ENCODE measurements at regions of chr4 and their contacts with region 1.

Region 1: DNA sequence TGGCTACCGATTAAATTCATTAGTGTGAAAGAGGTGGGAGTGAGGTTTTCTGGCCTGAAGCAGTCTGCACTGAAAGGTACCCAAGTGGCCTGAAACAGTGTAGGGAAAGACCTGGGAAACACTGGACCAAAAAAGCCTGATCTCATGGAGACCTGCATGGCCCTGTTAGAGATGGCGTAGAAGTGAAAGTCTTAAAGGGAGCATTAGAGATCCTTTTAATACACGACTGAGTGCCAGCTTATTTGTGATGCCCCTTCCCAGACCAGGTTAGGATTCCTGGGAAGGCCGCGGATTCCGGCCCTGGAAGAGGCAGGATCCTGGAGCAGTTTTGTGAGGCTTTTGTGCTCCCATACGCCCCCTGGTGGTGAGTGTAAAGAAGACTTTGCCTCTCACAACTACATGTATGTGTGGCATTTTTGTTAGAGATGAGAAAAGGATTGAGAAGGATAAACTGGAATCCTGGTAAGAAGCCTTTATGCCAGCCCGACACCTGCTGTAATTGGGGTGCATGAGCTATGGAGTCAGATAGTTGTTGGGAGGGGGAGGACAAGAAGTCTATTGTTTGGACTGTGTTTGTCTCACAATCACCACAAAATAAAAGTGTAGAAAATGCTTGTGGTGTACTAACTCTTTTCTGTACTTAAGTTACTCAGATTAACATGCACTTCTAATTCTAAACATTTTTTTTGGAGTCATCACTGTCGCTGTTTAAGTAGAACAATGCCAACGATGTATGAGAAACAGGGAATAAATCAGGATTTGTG is 54.0 kb downstream of the JADE1 start:
- DNase-seq: peak; percentile 76 to 90 (median 80)
- H3K4me3 ChIP-seq: no peak overlapping the region
- H3K27ac ChIP-seq: peak overlapping the region in 2 of 5 donors; percentile 26 to 38
- H3K4me1 ChIP-seq: peaks cover 10 to 20% of the 10 kb centered on the region in 2 donors
- H3K27me3 ChIP-seq: no peaks in the 10 kb centered on the region
- CTCF ChIP-seq: peak; percentile 83 to 93 (median 88)
- POLR2A ChIP-seq: no peak

Region 2: GRCh38 chr4:128191115-128191781 is 672.2 kb before region 1 on chr4:
- intact Hi-C with region 1: loop called in 1 of 2 experiments (anchors 10 kb)
- DNase-seq: peak; percentile 54 to 86 (median 66)
- H3K4me3 ChIP-seq: no peak overlapping the region
- H3K27ac ChIP-seq: no peak overlapping the region
- H3K4me1 ChIP-seq: no peaks in the 10 kb centered on the region
- H3K27me3 ChIP-seq: no peaks in the 10 kb centered on the region
- CTCF ChIP-seq: peak; percentile 63 to 92 (median 85)
- POLR2A ChIP-seq: no peak

Region 3: DNA sequence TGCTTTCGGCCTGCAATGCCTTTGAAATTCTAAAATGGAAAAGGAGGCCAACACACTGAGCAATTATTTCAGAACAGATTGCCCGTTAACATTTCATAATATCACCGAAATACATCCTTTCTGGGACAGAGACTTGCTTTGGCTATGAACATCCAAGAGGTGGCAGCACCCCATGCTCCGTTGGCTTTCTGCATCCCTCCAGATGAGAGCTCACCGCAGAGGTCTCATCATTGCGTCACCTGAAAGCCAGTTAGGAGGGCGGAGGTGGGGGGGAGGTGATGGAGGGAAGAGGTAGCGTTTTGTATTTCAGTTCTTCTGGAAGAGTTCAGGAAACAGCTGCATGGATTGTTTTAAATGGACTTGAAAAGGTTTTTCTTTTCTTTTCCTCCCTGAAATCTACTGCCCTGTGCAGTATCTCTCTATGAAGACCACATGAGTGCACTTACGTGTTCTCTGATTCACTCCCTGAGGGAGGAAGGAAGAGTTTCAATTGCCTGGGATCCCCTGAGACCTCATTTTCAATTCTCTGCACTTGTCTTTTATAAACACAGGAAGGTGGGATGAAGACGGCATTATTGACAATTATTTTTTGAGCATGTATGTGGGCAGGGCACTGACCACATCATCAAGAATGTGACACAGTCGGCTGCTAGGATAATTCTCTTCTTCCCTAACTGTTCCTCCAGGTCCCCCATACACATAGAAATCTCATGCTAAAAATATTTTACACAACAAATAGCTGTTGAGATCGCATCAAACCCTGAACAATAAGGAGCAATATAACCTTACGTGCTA is 409.0 kb before region 1 on chr4:
- intact Hi-C with region 1: loop called (anchors 5 to 10 kb)
- DNase-seq: peak; percentile 78 to 95 (median 89)
- H3K4me3 ChIP-seq: no peak overlapping the region
- H3K27ac ChIP-seq: peak overlapping the region in 2 of 5 donors; percentile 3 to 68
- H3K4me1 ChIP-seq: peaks cover 0 to 22% of the 10 kb centered on the region in 2 donors
- H3K27me3 ChIP-seq: no peaks in the 10 kb centered on the region
- CTCF ChIP-seq: peak; percentile 66 to 90 (median 86)
- POLR2A ChIP-seq: no peak

Region 4: DNA sequence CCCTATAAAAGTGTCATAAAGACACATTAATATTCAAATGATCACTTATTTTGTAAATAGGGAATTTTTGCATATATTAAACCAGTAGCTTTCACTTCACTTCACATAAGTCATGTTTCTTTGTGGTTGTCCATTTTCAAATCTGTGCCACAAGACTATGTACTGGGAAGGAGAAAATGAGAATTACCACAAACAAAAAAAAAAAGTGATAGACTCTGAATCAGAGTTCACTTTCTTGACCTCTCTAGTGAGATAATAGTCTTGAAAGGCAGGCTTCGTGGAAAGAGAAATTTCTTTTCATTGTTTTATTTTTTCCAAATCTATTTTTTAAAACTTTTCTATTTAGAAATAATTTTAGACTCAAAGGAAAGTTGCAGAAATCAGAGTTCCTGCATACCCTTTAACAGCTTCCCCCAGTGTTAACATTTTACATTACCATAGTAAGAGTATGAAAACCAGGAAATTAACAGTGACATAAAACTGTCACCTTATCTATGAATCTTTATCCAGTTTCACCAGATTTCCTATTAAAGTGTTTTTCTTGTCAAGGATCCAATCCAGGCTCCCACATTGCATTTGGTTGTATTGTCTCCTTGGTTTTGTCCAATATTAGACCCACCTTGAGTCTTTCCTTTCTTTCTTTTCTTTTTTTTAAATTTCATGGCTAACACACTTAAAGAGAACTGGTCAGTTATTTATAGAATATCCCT is 360.5 kb before region 1 on chr4:
- intact Hi-C with region 1: no loop called
- DNase-seq: no peak
- H3K4me3 ChIP-seq: no peak overlapping the region
- H3K27ac ChIP-seq: no peak overlapping the region
- H3K4me1 ChIP-seq: peaks cover 0 to 6% of the 10 kb centered on the region in 2 donors
- H3K27me3 ChIP-seq: no peaks in the 10 kb centered on the region
- CTCF ChIP-seq: no peak
- POLR2A ChIP-seq: no peak

Region 5: GRCh38 chr4:128565565-128566186 is 297.8 kb before region 1 on chr4:
- intact Hi-C with region 1: loop called (anchors 2 to 5 kb)
- DNase-seq: peak; percentile 50 to 83 (median 60)
- H3K4me3 ChIP-seq: no peak overlapping the region
- H3K27ac ChIP-seq: no peak overlapping the region
- H3K4me1 ChIP-seq: peaks cover 12 to 15% of the 10 kb centered on the region in 2 donors
- H3K27me3 ChIP-seq: no peaks in the 10 kb centered on the region
- CTCF ChIP-seq: peak; percentile 47 to 75 (median 60)
- POLR2A ChIP-seq: no peak

Region 6: DNA sequence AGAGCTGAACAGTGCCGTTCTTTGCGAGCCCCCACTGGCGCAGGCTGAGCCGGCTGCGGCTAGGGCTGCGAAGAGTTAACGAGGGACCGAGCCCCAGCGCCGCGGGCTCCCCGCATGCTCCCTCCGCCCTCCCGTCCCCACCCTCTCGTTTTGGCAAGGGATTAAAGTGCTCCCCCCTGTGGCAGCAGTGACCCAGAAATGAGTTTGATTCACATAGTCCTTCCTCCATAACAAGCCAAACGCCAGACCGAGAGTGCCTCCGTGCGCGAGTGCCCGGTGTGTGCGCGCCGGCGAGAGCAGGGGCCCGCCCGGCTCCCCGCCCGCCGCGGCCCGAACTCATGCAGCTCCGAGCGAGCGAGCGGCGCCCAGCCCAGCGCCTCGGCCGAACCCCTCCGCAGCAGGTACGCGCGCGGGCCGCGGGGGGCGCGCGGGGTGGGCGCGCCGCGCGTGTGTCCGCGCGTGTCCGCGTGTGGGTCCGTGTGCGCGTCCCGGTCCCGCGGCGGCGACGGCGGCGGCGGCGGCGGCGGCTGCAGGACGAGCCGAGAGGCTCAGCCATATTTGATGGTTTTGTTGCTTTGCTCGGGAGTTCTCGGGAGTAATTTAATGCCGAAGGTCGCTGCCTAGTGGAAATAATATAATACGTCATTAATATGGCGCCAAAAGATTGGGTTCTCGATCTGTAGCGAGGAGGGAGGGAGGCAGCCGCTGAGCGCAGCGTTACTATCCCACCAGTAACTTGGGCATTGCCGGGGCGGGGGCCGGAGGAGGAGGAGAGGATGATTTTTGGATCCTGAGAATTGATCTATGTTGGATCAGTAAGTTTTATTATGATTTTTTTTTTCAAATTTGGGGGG is 53.8 kb before region 1 on chr4 and contains the start of gene JADE1:
- intact Hi-C with region 1: loop called (anchors 5 kb)
- DNase-seq: peak; percentile 93 to 98 (median 95)
- H3K4me3 ChIP-seq: peak within 1 kb of the TSS; percentile 67 to 98 (median 92)
- H3K27ac ChIP-seq: peak within 1 kb of the TSS; percentile 94 to 98 (median 96)
- H3K4me1 ChIP-seq: peaks cover 2 to 12% of the 10 kb centered on the region in 2 donors
- H3K27me3 ChIP-seq: no peaks in the 10 kb centered on the region
- CTCF ChIP-seq: peak; percentile 35 to 77 (median 62)
- POLR2A ChIP-seq: peak; percentile 83 to 93
- total RNA-seq, gene JADE1: 25.9 to 66.7 (median 39.9) TPM